ENCODE measurements at regions of chr19 and their contacts with region 1.

Region 1: DNA sequence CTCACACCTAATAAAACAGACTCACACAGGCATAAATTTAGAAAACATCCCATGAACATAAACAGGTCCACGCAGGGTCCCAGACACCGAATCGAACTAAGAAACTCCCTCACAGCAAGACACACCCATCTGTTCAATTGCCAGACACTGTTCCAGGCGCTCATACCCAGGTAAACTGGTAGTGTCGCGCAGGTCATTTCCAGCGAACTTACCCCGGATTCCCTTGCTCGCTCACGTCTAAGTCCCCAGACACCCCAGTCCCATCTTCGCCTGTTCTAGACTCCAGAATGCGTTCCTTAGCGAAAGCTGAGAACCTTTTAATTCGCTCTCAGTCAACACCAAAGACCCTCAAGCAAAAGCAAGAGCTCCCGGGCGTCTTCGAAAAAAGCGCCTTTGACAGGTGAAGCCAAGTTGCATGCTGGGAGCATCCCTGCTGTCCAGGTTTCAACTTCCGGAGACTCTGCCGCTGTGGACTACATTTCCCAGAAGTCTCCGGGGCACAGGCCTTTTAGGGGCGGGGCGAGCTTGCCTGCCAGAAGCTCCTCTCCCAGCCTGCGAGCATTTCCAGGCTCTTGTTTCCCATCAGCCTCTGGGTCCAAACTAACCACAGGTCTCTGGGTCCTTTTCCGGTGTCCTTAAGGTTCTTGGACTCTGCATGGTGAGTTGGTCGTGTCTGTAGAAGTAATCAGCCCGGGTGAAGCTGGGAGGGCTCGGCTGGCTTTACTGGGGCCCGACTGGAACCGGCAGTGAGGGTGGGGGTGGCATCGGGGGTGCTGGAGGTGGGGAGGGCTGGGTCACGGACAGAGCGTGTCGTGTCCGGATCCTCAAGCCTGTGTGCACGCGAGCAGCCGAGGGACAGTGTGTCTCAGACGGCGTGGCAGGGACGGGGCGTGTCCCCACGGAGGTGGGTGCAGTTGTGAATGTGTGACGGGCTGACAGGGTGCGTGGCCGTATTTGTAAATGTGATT is at the start of gene ZNF283:
- DNase-seq: peak; percentile 77
- H3K4me3 Mint-ChIP-seq: peak within 1 kb of the TSS; percentile 86
- H3K27ac Mint-ChIP-seq: peak within 1 kb of the TSS; percentile 68
- H3K4me1 Mint-ChIP-seq: peaks cover 19% of the 10 kb centered on the region
- H3K27me3 Mint-ChIP-seq: peaks cover 11% of the 10 kb centered on the region
- total RNA-seq, gene ZNF283: 4.0 and 4.8 TPM in 2 replicates

Region 2: GRCh38 chr19:43463381-43464136 is 363.5 kb before region 1 on chr19:
- intact Hi-C with region 1: no loop called
- DNase-seq: peak; percentile 96
- H3K4me3 Mint-ChIP-seq: peak overlapping the region; percentile 92
- H3K27ac Mint-ChIP-seq: peak overlapping the region; percentile 90
- H3K4me1 Mint-ChIP-seq: peaks cover 45% of the 10 kb centered on the region
- H3K27me3 Mint-ChIP-seq: no peaks in the 10 kb centered on the region

Region 3: GRCh38 chr19:43754503-43755255 is 72.4 kb before region 1 on chr19 and contains the start of gene SMG9:
- intact Hi-C with region 1: loop called (anchors 1 kb)
- DNase-seq: peak; percentile 99
- H3K4me3 Mint-ChIP-seq: peak within 1 kb of the TSS; percentile 98
- H3K27ac Mint-ChIP-seq: peak within 1 kb of the TSS; percentile 100
- H3K4me1 Mint-ChIP-seq: peaks cover 57% of the 10 kb centered on the region
- H3K27me3 Mint-ChIP-seq: peaks cover 2% of the 10 kb centered on the region
- total RNA-seq, gene SMG9: 86.6 and 89.2 TPM in 2 replicates

Region 4: DNA sequence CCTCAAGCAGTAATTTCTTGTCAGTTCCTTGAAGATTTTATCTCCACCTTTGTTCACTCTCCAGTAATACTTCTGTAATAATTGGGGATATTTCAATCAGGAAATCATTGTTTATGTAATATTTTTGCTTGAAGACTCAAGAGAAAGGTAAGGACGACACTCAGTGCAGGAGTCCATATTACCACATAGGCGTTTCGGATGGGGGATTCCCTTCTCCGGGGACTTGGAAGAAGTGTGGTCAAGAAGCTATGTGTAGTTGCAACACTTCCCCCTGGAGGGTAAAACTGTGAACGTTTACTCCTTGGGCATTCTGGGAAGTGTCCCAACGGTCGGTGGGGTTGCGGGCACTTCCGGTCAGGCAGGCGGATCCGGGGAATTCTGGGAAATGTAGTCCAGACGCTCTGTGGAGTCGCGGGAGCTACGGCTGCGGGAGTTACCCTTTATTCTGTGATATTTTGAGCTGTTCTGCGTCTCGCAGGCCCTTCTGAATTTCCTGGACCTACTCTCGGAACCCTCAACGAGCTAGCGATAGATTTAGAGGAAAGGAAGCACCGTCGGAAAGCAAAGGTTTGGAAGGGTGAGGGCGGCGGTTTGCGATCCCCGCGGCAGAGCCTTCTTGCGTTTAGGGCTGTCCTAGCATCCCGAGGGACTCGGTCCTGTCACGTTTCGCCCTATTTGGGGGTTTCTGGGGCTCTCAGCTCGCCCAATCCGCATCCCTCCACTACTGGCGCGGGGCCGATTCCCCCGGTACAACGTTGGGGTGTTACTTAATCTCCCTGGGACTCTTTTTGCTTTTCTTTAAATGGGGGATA is 124.0 kb after region 1 on chr19 and contains the start of gene ZNF221:
- intact Hi-C with region 1: loop called (anchors 1 kb)
- DNase-seq: peak; percentile 50
- H3K4me3 Mint-ChIP-seq: peak within 1 kb of the TSS; percentile 94
- H3K27ac Mint-ChIP-seq: peak within 1 kb of the TSS; percentile 66
- H3K4me1 Mint-ChIP-seq: peaks cover 11% of the 10 kb centered on the region
- H3K27me3 Mint-ChIP-seq: no peaks in the 10 kb centered on the region
- total RNA-seq, gene ZNF221: 0.56 and 0.75 TPM in 2 replicates

Region 5: GRCh38 chr19:44071824-44072542 is 244.9 kb after region 1 on chr19 and contains the start of gene ZNF284:
- intact Hi-C with region 1: loop called (anchors 1 kb)
- DNase-seq: peak; percentile 74
- H3K4me3 Mint-ChIP-seq: peak within 1 kb of the TSS; percentile 86
- H3K27ac Mint-ChIP-seq: peak within 1 kb of the TSS; percentile 79
- H3K4me1 Mint-ChIP-seq: peaks cover 17% of the 10 kb centered on the region
- H3K27me3 Mint-ChIP-seq: no peaks in the 10 kb centered on the region
- total RNA-seq, gene ZNF284: 1.3 and 1.4 TPM in 2 replicates

Region 6: DNA sequence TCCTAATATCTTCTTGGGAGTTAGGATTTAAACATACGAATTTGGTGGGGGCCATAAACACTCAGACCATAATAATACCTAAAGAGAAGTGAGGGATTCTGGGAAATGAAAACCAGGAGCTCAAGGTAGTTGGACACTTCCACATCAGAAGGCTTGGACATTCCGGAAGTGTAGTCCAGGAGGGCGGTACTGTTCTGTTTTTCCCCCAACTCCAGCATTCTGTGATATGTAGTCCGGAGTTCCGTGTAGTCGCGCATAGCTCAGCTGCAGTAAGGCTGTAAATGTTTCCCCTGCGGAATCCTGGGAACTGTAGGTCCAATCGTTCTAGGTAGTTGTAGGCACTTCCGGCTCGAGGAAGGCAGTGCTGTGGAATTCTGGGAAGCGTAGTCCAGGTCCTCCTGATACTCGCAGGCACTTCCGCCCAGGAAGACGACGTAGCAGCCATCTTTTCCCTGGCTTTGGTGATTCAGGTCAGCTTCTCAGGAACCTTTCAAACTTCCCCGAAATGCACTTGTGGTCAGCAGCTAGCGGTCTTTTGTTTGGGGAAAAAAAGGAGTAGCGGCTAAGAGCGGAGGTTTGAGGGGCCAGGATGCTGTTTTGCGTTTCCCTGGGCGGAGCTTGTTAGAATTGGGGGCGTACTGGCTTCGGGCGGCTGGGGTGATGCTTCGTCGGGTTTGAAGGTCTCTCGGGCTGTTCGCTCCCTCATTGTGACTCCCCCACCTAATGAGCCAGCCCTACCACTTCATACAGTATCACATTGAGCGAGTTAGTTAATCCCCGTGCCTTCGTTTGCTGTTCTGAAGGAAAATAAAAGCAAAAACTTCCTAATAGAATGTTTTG is 337.8 kb after region 1 on chr19 and contains the start of gene ZNF226:
- intact Hi-C with region 1: loop called (anchors 10 kb)
- DNase-seq: peak; percentile 71
- H3K4me3 Mint-ChIP-seq: peak within 1 kb of the TSS; percentile 90
- H3K27ac Mint-ChIP-seq: peak within 1 kb of the TSS; percentile 84
- H3K4me1 Mint-ChIP-seq: peaks cover 29% of the 10 kb centered on the region
- H3K27me3 Mint-ChIP-seq: no peaks in the 10 kb centered on the region
- total RNA-seq, gene ZNF226: 10.5 and 11.6 TPM in 2 replicates

Region 7: GRCh38 chr19:44500148-44500956 is 673.3 kb after region 1 on chr19 and contains the start of gene ZNF180:
- intact Hi-C with region 1: loop called (anchors 2 kb)
- DNase-seq: peak; percentile 92
- H3K4me3 Mint-ChIP-seq: peak within 1 kb of the TSS; percentile 93
- H3K27ac Mint-ChIP-seq: peak within 1 kb of the TSS; percentile 86
- H3K4me1 Mint-ChIP-seq: peaks cover 28% of the 10 kb centered on the region
- H3K27me3 Mint-ChIP-seq: no peaks in the 10 kb centered on the region
- total RNA-seq, gene ZNF180: 8.8 and 10.1 TPM in 2 replicates